ENCODE measurements at regions of chr6 and their contacts with region 1.

Region 1: DNA sequence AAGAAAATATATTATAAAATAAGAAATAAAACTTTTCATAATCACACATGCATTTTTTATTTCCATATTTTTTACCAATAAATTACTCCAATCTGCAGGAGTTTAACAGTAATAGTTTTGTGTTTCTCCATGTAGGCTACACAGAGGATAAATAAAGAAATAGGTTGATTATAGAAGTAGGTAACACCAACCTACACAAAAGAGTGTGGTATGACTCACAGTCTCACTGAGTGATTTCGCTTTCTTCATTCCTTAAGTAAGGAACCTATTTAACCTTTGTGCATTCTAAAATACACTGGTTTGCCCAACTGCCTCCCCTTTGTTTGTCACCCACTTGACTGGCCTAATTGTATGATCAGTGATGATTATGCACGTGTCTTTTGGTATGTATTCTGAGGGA is 244.2 kb upstream of the RIMS1 start:
- DNase-seq: no peak
- H3K4me3 ChIP-seq: no peak overlapping the region
- CTCF ChIP-seq: no peak

Region 2: DNA sequence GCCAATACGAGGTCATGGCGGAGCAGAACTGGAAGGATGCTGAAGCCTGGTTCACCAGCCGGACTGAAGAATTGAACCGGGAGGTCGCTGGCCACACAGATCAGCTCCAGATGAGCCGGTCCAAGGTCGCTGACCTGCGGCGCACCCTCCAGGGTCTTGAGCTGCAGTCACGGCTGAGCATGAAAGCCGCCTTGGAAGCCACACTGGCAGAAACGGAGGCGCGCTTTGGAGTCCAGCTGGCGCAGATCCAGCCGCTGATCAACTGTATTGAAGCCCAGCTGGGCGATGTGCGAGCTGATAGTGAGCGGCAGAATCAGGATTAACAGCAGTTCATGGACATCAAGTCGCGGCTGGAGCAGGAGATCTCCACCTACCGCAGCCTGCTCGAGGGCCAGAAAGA is 56.6 kb before region 1 on chr6:
- in situ Hi-C with region 1: no loop called
- DNase-seq: no peak
- H3K4me3 ChIP-seq: no peak overlapping the region
- CTCF ChIP-seq: no peak

Region 3: DNA sequence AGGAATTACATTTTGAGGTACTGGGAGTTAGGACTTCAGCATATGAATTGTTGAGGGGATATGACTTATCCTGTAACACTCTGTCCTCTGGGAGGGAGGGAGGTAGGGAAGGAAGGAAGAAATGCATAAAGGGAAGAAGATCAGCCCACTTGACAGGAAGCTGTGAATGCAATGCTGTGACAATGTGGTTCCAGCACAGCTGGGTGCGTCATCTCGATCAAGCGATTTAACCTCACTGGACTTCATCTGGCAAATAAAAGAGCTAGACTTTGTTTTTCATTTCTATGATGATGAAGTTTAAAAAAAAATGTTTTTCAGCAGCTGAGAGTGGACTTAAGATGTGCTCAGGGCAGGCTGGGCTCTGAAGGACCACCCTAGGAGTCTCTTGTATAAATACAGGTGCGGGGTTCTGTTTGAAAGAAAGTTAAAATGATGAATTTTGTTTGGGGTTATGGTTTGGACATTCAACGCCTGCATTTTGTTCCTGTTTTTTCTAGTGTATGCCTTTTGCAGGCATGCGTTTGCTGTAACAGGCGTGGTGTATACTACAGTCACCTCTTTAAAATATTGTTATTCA is 422.4 kb after region 1 on chr6:
- in situ Hi-C with region 1: loop called (anchors 25 kb)
- DNase-seq: no peak
- H3K4me3 ChIP-seq: no peak overlapping the region
- CTCF ChIP-seq: no peak